ENCODE measurements at regions of chr5 and their contacts with region 1.

Region 1: GRCh38 chr5:149667084-149667828 is 62.9 kb upstream of the PPARGC1B start:
- DNase-seq: peak; percentile 34
- H3K4me3 Mint-ChIP-seq: no peak overlapping the region
- H3K27ac Mint-ChIP-seq: no peak overlapping the region
- H3K4me1 Mint-ChIP-seq: no peaks in the 10 kb centered on the region
- H3K27me3 Mint-ChIP-seq: peaks cover 6% of the 10 kb centered on the region

Region 2: GRCh38 chr5:149656576-149657182 is 10.6 kb before region 1 on chr5:
- CTCF ChIA-PET with region 1: interaction called, 17 read pairs
- POLR2A ChIA-PET with region 1: no interaction called
- intact Hi-C with region 1: no loop called
- DNase-seq: peak; percentile 57
- H3K4me3 Mint-ChIP-seq: peak overlapping the region; percentile 16
- H3K27ac Mint-ChIP-seq: no peak overlapping the region
- H3K4me1 Mint-ChIP-seq: no peaks in the 10 kb centered on the region
- H3K27me3 Mint-ChIP-seq: peaks cover 6% of the 10 kb centered on the region

Region 3: GRCh38 chr5:149731639-149732323 is 64.5 kb after region 1 on chr5:
- CTCF ChIA-PET with region 1: interaction called, 3 read pairs
- POLR2A ChIA-PET with region 1: no interaction called
- intact Hi-C with region 1: loop called (anchors 1 kb)
- DNase-seq: peak; percentile 89
- H3K4me3 Mint-ChIP-seq: peak overlapping the region; percentile 77
- H3K27ac Mint-ChIP-seq: no peak overlapping the region
- H3K4me1 Mint-ChIP-seq: peaks cover 3% of the 10 kb centered on the region
- H3K27me3 Mint-ChIP-seq: no peaks in the 10 kb centered on the region